ENCODE measurements at regions of chr5 and their contacts with region 1.

Region 1: DNA sequence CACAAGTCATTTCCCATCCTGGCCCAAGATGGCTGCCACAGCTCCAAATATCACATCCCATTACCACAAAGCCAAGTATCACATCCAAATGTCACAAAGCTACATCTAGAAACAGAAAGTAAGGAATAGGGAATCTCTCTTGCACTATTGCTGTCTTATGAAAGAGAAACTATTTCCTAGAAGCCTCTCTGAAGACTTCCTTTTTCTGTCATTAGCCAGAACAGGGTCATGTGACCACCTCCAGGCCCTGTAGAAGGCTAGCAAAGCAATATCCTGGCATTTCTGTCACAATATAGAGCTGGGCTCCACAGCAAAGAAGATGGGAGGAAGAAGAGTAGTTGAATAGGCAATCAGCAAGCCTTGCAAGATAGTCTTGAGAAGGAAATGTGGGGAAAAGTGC is 99.2 kb downstream of the SH3TC2 start:
- DNase-seq: peak in 1 of 2 experiments; percentile 31
- H3K4me3 ChIP-seq: no peak overlapping the region
- H3K27ac ChIP-seq: peak overlapping the region; percentile 34
- H3K4me1 ChIP-seq: peaks cover 57% of the 10 kb centered on the region
- H3K27me3 ChIP-seq: no peaks in the 10 kb centered on the region
- CTCF ChIP-seq: no peak

Region 2: DNA sequence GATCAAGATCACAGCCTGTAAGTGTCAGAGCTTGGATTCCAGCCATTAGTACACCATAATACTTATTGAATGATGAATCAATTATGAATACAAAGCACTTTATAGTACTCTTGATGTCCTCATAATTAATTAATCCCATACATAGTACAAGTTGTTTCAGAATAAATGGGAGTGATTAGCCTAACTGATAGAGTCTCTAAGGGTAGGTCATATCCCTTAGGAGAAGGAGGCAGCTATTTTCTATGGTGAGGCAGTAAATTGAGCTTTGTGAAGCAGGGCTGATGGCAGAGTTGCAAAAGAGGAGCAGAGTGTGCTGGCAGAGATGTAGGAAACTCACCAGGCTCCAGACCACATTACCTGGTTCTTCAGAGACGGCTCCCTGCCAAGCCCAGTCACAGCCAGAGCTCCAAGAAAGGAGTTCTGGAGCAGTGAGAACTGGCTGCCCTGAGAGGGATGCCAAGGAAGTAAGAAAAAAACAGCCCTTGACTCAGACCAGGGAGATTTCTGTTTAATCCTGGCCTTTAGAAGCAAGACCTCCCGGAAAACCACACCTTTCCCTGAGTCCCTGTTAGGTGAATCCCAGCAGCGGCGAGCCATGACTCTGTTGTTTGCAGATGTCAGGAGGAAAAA is 13.7 kb before region 1 on chr5:
- CTCF ChIA-PET with region 1: no interaction called
- POLR2A ChIA-PET with region 1: interaction called, 26 read pairs
- intact Hi-C with region 1: no loop called
- DNase-seq: no peak
- H3K4me3 ChIP-seq: no peak overlapping the region
- H3K27ac ChIP-seq: no peak overlapping the region
- H3K4me1 ChIP-seq: no peaks in the 10 kb centered on the region
- H3K27me3 ChIP-seq: no peaks in the 10 kb centered on the region
- CTCF ChIP-seq: no peak

Region 3: DNA sequence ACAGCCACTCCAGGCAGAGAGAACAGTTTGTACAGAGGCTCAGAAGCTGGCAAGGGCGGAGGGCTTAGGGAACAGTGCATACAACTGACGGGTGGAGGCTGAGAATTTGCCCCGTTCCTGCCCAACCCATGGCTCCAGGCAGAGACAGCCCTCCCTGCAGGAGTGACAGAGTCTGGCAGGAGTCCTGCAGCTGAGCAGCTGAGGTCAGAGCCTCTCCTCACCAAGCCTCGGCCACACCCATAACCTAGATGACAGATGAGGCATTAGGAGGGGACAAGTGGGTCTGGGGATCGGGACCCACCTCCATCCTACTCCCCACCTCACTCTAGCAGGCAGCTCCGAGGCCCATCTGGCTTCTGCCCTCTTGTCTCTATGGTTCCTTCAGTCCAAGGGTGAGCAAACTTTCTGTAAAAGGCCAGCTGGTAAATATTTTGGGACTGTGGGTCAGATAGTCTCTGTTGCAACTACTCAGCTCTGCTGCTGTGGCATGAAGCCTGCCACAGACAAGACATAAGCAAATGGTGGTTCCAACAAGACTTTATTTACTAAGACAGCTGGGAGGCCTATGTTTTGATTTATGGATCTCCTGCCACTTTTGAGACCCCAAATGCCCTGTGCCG is 15.6 kb after region 1 on chr5:
- CTCF ChIA-PET with region 1: interaction called, 11 read pairs
- POLR2A ChIA-PET with region 1: interaction called, 6 read pairs
- intact Hi-C with region 1: loop called (anchors 1 kb)
- DNase-seq: peak; percentile 84 to 85
- H3K4me3 ChIP-seq: peak overlapping the region; percentile 32; the same call in 1 of the 2 replicates
- H3K27ac ChIP-seq: peak overlapping the region; percentile 99
- H3K4me1 ChIP-seq: peaks cover 79% of the 10 kb centered on the region
- H3K27me3 ChIP-seq: no peaks in the 10 kb centered on the region
- CTCF ChIP-seq: no peak

Region 4: DNA sequence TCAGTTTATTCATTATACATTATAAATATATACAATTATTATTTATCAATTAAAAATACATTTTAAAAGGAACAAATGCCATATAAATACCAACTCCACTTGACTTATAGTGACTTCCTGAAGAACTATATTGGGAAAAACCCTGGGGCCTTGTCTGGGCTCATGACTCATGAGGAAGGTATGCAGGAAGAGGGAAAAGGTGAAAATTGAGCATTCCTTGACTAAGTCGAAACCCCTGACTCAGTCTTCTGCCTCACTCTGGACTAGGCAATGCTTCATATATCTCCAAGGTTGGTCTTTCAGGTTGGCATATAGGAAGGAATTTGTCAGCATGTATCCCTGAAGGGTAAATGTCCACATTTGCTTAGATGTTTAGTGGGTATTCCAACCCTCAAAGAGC is 20.7 kb after region 1 on chr5:
- CTCF ChIA-PET with region 1: interaction called, 11 read pairs
- POLR2A ChIA-PET with region 1: interaction called, 6 read pairs
- intact Hi-C with region 1: loop called (anchors 1 kb)
- DNase-seq: peak; percentile 78 to 94
- H3K4me3 ChIP-seq: peak overlapping the region; percentile 19; the same call in 1 of the 2 replicates
- H3K27ac ChIP-seq: peak overlapping the region; percentile 99
- H3K4me1 ChIP-seq: peaks cover 82% of the 10 kb centered on the region
- H3K27me3 ChIP-seq: no peaks in the 10 kb centered on the region
- CTCF ChIP-seq: no peak

Region 5: GRCh38 chr5:149915392-149916260 is 952.0 kb after region 1 on chr5:
- CTCF ChIA-PET with region 1: no interaction called
- POLR2A ChIA-PET with region 1: no interaction called
- intact Hi-C with region 1: no loop called
- DNase-seq: peak; percentile 73 to 94
- H3K4me3 ChIP-seq: no peak overlapping the region
- H3K27ac ChIP-seq: peak overlapping the region; percentile 91
- H3K4me1 ChIP-seq: peaks cover 52% of the 10 kb centered on the region
- H3K27me3 ChIP-seq: no peaks in the 10 kb centered on the region
- CTCF ChIP-seq: no peak